Activated naive CD4-positive, alpha-beta T cell treated with anti-CD3 and anti-CD28 coated beads, Interleukin-2, amount 10 ng/mL, durations not matched to agents 7 days and 5 days (primary cell): ENCODE measurements at regions of chr12 and their contacts with region 1.

Region 1: DNA sequence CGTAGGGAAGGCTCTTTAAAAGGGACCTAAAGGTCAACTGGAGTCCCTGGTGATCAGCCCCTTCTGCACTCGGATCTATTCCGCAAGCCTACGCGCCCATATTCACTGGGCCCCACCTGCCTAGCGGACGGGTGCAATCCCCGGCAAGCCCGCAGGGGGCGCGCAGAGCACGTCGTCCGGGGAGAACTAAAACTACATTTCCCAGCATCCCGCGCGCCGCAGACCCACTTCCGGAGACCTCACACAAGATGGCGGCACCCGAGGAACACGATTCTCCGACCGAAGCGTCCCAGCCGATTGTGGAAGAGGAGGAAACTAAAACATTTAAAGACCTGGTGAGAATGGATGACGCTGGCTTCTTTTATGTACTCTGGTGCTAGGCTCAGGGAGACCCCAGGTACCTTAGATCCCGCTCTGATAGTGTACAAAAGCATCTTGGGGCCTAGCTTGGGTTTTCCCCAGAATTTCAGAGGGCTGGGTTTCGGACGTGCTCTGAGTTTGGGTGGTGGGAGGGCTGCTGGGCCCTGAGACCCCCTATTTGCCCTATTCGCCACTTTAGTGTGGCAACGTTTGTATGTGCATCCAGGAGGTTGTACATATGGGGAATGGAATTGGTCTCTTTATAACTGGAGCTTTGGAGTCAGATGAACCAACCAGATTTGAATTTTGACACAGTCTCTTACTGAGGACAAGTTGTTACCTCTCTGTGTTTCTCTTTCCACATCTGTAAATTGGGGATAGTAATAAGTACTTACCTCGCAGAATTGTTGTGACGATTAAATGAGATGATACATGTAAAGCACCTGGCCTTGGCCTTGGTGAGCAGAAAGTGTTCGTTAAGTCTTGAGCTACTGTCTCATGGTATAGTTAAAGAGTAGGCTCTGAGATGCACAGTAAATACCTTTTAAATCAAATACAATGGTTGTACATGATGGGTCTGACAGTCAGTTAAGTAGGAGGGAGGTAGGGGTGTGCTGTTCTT is at the start of gene DDX47:
- DNase-seq: peak; percentile 98
- H3K4me3 Mint-ChIP-seq: peak within 1 kb of the TSS; percentile 83
- H3K27ac Mint-ChIP-seq: peak within 1 kb of the TSS; percentile 83
- H3K4me1 Mint-ChIP-seq: peaks cover 78% of the 10 kb centered on the region
- H3K27me3 Mint-ChIP-seq: no peaks in the 10 kb centered on the region

Region 2: GRCh38 chr12:12442548-12443071 is 370.8 kb before region 1 on chr12:
- CTCF ChIA-PET with region 1: no interaction called
- DNase-seq: no peak
- H3K4me3 Mint-ChIP-seq: no peak overlapping the region
- H3K27ac Mint-ChIP-seq: peak overlapping the region; percentile 94
- H3K4me1 Mint-ChIP-seq: peaks cover 50% of the 10 kb centered on the region
- H3K27me3 Mint-ChIP-seq: no peaks in the 10 kb centered on the region

Region 3: DNA sequence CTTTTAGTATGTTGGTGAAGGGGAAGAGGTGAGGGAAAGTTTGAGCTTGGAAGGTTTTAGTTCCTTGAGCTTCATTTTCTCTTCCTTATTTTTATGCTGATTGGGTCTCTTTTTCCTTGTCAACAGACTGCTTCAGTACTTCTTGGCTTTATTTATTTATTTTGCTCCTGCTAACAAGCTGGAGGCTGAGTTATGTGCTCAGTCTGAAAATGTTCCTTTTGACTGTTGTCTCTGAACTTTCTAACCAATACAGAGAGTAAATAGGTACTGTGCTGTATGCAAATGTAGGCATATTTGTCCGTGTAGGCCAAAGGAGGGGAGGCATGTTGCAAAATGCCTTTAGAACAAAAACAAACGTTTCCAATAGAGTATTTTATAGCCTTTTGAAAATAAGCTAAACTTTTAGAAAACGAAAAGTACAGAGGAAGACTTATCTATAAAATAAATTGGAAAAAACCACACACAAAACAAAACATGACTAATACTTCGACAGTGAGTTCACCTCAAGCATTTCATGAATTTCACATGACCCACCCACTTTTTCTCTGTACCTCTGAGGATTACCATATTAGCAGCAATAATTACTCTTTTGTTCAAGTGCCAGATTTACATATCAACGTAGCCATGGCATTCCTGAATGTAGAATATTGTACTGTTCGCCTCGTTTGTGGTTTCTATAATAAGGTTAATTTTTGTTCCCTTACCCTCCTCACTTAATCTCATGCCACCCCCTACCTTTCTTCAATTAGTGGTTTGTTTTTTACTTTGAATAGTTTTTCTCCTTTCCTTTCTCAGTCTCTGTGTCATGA is 206.4 kb before region 1 on chr12:
- CTCF ChIA-PET with region 1: no interaction called
- DNase-seq: no peak
- H3K4me3 Mint-ChIP-seq: no peak overlapping the region
- H3K27ac Mint-ChIP-seq: no peak overlapping the region
- H3K4me1 Mint-ChIP-seq: peaks cover 26% of the 10 kb centered on the region
- H3K27me3 Mint-ChIP-seq: peaks cover 6% of the 10 kb centered on the region

Region 4: GRCh38 chr12:12803186-12803585 is 10.2 kb before region 1 on chr12:
- CTCF ChIA-PET with region 1: interaction called, 11 read pairs
- DNase-seq: peak; percentile 68
- H3K4me3 Mint-ChIP-seq: peak overlapping the region; percentile 34
- H3K27ac Mint-ChIP-seq: peak overlapping the region; percentile 73
- H3K4me1 Mint-ChIP-seq: peaks cover 62% of the 10 kb centered on the region
- H3K27me3 Mint-ChIP-seq: no peaks in the 10 kb centered on the region